Endothelial cell of umbilical vein (primary cell): ENCODE measurements at regions of chr11 and their contacts with region 1.

Region 1: DNA sequence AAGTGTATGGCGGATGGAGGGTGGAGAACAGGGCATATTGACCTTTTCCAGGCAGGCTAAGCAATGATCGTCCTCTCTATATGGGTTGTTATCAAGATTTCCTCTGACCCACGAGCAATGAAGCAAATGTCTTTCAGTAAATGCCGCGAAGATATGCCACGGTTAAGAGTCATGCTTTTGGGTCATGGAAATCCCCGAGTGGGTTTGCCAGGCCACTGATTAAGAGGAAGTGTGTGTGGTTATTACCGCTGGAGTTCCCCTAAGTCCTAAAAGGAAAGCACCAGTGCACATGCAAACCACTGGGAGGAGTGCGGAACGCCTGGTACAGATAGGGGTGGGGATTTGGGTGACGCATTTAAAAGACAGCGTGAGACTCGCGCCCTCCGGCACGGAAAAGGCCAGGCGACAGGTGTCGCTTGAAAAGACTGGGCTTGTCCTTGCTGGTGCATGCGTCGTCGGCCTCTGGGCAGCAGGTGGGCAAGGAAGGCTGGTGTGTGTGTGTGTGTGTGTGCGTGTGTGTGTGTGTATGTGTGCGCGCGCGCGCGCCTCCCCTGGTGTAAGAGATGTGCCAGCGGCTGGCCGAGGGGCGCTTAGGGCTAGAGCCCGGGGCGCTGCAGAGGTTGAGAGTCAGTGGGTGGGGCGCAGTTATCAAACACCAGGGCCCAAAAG is at the start of gene BIRC3:
- DNase-seq: peak; percentile 91
- H3K4me3 ChIP-seq: peak within 1 kb of the TSS; percentile 10 to 46 (median 36)
- H3K27ac ChIP-seq: peak within 1 kb of the TSS; percentile 0
- H3K4me1 ChIP-seq: peaks cover 6% of the 10 kb centered on the region
- H3K27me3 ChIP-seq: no peaks in the 10 kb centered on the region
- CTCF ChIP-seq: peak; percentile 7 to 24
- POLR2A ChIP-seq: no peak
- total RNA-seq, gene BIRC3: 0.60 and 1.4 TPM in 2 replicates

Region 2: DNA sequence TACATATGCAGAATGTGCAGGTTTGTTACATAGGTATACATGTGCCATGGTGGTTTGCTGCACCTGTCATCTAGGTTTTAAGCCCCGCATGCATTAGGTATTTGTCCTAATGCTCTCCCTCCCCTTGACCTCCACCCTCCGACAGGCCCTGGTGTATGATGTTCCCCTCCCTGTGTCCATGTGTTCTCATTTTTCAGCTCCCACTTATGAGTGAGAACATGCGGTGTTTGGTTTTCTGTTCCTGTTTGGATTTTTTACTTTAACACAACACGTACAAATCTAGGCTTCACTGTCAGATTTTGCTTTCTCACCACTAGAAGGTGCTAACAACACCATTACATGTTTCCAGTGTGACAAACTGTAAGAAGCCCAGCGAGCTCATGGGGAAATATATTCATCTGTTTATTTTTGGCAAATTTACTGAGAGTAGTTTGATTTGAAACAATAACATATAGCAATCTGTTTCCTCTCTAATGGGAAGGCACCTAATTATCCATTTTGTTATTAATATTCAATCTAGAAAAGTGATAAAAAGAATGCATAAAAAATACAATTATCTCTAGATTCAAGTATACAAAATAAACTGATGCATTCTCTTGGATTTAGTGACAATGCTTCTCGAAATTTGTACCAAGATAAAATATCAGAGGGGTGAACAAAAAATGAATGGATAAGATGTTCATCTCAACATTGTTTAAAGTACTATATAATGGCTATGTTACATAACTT is 23.2 kb before region 1 on chr11:
- CTCF ChIA-PET with region 1: interaction called, 13 read pairs
- POLR2A ChIA-PET with region 1: no interaction called
- dilution Hi-C with region 1: no loop called
- intact Hi-C with region 1: no loop called
- DNase-seq: peak; percentile 50
- H3K4me3 ChIP-seq: no peak overlapping the region
- H3K27ac ChIP-seq: no peak overlapping the region
- H3K4me1 ChIP-seq: no peaks in the 10 kb centered on the region
- H3K27me3 ChIP-seq: no peaks in the 10 kb centered on the region
- CTCF ChIP-seq: peak; percentile 41 to 61
- POLR2A ChIP-seq: no peak